ENCODE measurements at regions of chr2 and their contacts with region 1.

Region 1: GRCh38 chr2:112254466-112255239 is at the start of gene ZC3H8:
- DNase-seq: peak; percentile 98
- ATAC-seq: peak; percentile 92
- H3K4me3 Mint-ChIP-seq: no peak within 1 kb of the TSS
- H3K27ac Mint-ChIP-seq: peak within 1 kb of the TSS; percentile 88
- H3K4me1 Mint-ChIP-seq: peaks cover 19% of the 10 kb centered on the region
- H3K27me3 Mint-ChIP-seq: no peaks in the 10 kb centered on the region
- total RNA-seq, gene ZC3H8: 21.6 to 27.1 TPM

Region 2: DNA sequence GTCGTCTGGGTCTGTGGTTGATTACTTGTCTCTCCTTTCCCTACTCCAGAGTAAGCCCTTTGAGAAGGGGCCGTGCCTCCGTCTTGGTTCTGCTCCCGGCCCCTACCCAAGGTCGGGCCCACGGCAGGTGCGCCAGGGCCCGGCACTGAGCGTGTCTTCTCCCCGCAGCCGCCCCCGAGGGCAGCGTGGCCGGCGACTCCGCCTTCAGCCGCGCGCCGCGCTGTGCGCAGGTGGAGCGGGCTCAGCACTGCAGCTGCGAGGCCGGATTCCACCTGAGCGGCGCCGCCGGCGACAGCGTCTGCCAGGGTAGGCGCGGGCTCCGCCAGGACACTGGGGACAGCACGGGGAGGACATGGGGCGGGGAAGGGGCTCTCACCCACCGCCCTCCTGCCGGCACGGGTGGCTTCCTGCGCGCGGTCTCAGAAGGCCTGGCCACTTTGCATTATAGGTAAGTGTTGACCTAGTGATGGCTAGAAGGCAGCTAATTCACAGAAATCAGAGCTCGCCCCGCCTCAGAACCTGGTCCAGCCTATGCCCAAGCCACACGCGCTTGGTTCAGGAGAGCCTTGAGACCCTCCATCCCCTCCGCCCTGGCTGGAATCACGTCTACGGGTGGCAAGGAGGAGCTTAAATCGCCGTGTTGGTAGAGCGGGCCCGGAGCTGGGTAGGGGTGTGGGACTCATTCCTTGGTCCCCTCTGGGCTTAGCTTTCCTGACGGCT is 72.9 kb before region 1 on chr2:
- CTCF ChIA-PET with region 1: interaction called, 3 read pairs
- POLR2A ChIA-PET with region 1: interaction called, 10 read pairs
- intact Hi-C with region 1: loop called in 1 of 2 experiments (anchors 1 kb)
- DNase-seq: peak; percentile 84
- ATAC-seq: peak; percentile 67
- H3K4me3 Mint-ChIP-seq: peak overlapping the region; percentile 88
- H3K27ac Mint-ChIP-seq: peak overlapping the region; percentile 91
- H3K4me1 Mint-ChIP-seq: peaks cover 69% of the 10 kb centered on the region
- H3K27me3 Mint-ChIP-seq: no peaks in the 10 kb centered on the region

Region 3: GRCh38 chr2:112187805-112188596 is 66.7 kb before region 1 on chr2:
- CTCF ChIA-PET with region 1: interaction called, 4 read pairs
- POLR2A ChIA-PET with region 1: interaction called, 5 read pairs
- intact Hi-C with region 1: loop called (anchors 1 to 2 kb)
- DNase-seq: peak; percentile 90
- ATAC-seq: peak; percentile 86
- H3K4me3 Mint-ChIP-seq: peak overlapping the region; percentile 62
- H3K27ac Mint-ChIP-seq: peak overlapping the region; percentile 96
- H3K4me1 Mint-ChIP-seq: peaks cover 90% of the 10 kb centered on the region
- H3K27me3 Mint-ChIP-seq: no peaks in the 10 kb centered on the region

Region 4: GRCh38 chr2:112275306-112275886 is 20.7 kb after region 1 on chr2 and contains the start of gene ZC3H6:
- CTCF ChIA-PET with region 1: interaction called, 29 read pairs
- POLR2A ChIA-PET with region 1: interaction called, 3 read pairs
- intact Hi-C with region 1: loop called (anchors 1 kb)
- DNase-seq: peak; percentile 100
- ATAC-seq: peak; percentile 98
- H3K4me3 Mint-ChIP-seq: peak within 1 kb of the TSS; percentile 90
- H3K27ac Mint-ChIP-seq: peak within 1 kb of the TSS; percentile 97
- H3K4me1 Mint-ChIP-seq: peaks cover 26% of the 10 kb centered on the region
- H3K27me3 Mint-ChIP-seq: no peaks in the 10 kb centered on the region
- total RNA-seq, gene ZC3H6: 15.1 to 15.3 TPM

Region 5: DNA sequence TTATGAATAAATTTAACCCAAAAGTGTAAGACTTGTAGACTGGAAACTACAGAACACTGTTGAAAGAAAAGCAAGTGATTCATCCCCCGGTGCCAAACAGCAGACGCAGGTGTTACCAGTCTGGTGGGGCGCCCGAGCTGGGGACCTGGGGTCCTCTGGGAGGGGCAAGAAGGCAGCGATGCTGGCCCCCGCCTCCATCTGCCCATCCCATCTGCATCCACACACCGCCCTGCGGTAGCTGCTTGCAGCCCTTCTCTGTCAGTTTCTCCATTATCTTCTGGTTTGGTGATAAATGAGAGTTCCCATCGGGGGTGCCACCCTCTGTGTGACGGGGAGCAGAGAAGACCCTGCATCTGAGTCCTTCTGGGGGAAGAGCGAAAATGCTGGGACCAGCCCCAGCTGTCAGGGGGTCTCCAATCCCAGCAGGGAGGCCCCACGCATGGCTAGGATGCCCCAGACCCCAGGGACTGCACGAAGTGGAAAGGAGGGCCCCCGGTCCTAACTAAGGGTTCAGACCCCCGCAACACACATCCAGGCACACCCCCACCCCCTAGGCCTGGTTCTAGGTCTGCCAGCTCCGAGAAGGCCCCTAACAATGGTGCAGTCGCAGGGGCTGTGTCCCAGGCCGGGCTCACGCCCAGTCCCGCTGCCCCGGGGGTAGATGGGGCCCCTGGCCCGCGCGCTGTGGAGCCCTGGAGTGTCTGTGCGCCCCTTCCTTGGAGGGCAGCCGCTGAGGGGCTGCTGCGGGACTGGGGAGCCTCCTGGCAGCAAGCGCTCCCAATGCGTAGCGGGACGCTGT is 179.5 kb after region 1 on chr2:
- CTCF ChIA-PET with region 1: no interaction called
- POLR2A ChIA-PET with region 1: no interaction called
- intact Hi-C with region 1: loop called (anchors 1 to 10 kb)
- DNase-seq: no peak
- ATAC-seq: no peak
- H3K4me3 Mint-ChIP-seq: peak overlapping the region; percentile 65
- H3K27ac Mint-ChIP-seq: no peak overlapping the region
- H3K4me1 Mint-ChIP-seq: peaks cover 10% of the 10 kb centered on the region
- H3K27me3 Mint-ChIP-seq: peaks cover 5% of the 10 kb centered on the region

Region 6: GRCh38 chr2:112542123-112542983 is 287.7 kb after region 1 on chr2 and contains the start of gene POLR1B:
- CTCF ChIA-PET with region 1: no interaction called
- POLR2A ChIA-PET with region 1: interaction called, 3 read pairs
- intact Hi-C with region 1: loop called (anchors 2 to 5 kb)
- DNase-seq: peak; percentile 87
- ATAC-seq: peak; percentile 85
- H3K4me3 Mint-ChIP-seq: no peak within 1 kb of the TSS
- H3K27ac Mint-ChIP-seq: no peak within 1 kb of the TSS
- H3K4me1 Mint-ChIP-seq: peaks cover 18% of the 10 kb centered on the region
- H3K27me3 Mint-ChIP-seq: no peaks in the 10 kb centered on the region
- total RNA-seq, gene POLR1B: 47.0 to 63.3 TPM